IMR-90 (cell line): ENCODE measurements at regions of chr1 and their contacts with region 1.

Region 1: GRCh38 chr1:29280409-29281131 is 44.2 kb downstream of the PTPRU start:
- DNase-seq: peak; percentile 59
- ATAC-seq: peak; percentile 36
- H3K4me3 ChIP-seq: no peak overlapping the region
- H3K27ac ChIP-seq: no peak overlapping the region
- H3K4me1 ChIP-seq: 0 out of 2 replicates have a peak, but pooled peaks cover 3% of the 10 kb centered on the region
- H3K27me3 ChIP-seq: no peaks in the 10 kb centered on the region
- CTCF ChIP-seq: no peak
- POLR2A ChIP-seq: no peak
- RAD21 ChIP-seq: no peak

Region 2: DNA sequence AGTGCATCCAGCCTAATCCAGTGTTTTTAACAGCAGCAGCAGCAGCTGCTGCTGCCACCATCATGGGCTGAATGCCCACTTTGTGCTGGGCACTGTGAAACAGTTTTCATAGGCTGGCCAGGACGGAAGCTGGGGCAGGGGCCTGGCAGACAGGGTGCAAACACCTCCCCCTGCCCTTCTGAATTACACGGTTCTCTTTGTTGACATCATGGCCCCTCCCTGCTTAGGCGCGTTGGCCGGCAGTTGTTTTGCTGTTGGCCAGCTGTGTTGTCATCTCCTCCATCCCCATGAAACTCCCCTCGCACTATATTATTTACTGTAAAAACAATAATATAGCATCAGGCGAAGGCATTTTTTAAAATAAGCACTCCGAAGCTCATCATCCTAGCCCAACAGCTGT is 11.2 kb before region 1 on chr1:
- CTCF ChIA-PET with region 1: no interaction called
- POLR2A ChIA-PET with region 1: interaction called, 12 read pairs
- dilution Hi-C with region 1: no loop called
- in situ Hi-C with region 1: no loop called
- intact Hi-C with region 1: no loop called
- DNase-seq: no peak
- ATAC-seq: no peak
- H3K4me3 ChIP-seq: no peak overlapping the region
- H3K27ac ChIP-seq: no peak overlapping the region
- H3K4me1 ChIP-seq: peaks cover 10% of the 10 kb centered on the region; the same call in 1 of the 2 replicates
- H3K27me3 ChIP-seq: no peaks in the 10 kb centered on the region
- CTCF ChIP-seq: no peak
- POLR2A ChIP-seq: no peak
- RAD21 ChIP-seq: no peak